Activated B cell treated with CpG ODN at 0.5 μM for 24 hours (primary cell): ENCODE measurements at regions of chr19 and their contacts with region 1.

Region 1: GRCh38 chr19:55653758-55654539 is 886 bp upstream of the U2AF2 start:
- DNase-seq: peak; percentile 95
- ATAC-seq: peak; percentile 77
- H3K4me3 Mint-ChIP-seq: peak overlapping the region; percentile 95
- H3K27ac Mint-ChIP-seq: peak overlapping the region; percentile 98
- H3K4me1 Mint-ChIP-seq: peaks cover 56% of the 10 kb centered on the region
- H3K27me3 Mint-ChIP-seq: no peaks in the 10 kb centered on the region
- CTCF ChIP-seq: peak; percentile 97

Region 2: DNA sequence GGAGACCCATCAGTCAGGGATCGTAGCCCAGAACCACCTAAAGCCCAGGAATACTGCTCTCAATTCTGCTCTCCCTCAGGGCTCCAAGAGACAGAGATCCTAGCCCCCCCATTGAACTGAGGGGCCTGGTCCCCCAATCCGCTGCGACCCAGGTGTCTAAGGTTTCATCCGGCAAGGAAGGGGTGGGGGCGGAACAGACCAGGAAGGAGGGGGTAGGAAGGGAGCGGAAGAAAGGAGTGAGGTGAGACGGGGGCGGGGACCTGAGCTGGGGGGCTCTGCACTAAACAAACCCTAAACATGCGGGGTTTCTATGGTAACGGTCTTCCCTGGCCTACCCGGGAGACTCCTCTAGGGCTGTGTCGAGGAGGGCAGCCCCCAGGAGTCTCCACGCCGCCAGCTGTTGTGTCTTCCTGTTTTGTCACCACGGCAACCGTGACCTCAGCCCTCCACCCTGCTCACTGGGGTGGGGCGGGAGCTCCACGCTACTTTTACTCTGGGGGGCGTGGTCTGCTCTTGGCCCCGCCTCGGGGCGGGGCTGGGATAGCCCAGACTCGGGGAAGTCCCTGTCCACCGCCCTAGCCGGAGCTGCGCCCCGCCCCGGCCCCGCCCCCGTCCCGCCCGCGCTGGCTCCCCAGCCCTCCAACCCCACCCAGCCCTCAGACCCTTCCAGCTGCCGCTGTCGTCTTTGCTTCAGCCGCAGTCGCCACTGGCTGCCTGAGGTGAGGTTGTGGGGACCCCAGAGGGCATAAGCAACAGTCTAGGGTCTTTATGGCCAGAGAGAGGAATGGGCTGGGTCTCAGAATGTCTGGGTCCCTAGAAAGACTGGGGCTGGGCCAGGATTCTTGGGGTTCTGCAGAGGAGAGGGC is 1786.5 kb before region 1 on chr19 and contains the start of gene MYADM:
- CTCF ChIA-PET with region 1: no interaction called
- POLR2A ChIA-PET with region 1: no interaction called
- intact Hi-C with region 1: loop called (anchors 5 kb)
- DNase-seq: peak; percentile 99
- ATAC-seq: peak; percentile 65
- H3K4me3 Mint-ChIP-seq: peak within 1 kb of the TSS; percentile 91
- H3K27ac Mint-ChIP-seq: peak within 1 kb of the TSS; percentile 93
- H3K4me1 Mint-ChIP-seq: peaks cover 44% of the 10 kb centered on the region
- H3K27me3 Mint-ChIP-seq: no peaks in the 10 kb centered on the region
- CTCF ChIP-seq: no peak
- total RNA-seq, gene MYADM: 10.9 and 12.9 TPM in 2 replicates

Region 3: GRCh38 chr19:55339048-55339888 is 314.7 kb before region 1 on chr19 and contains the start of gene KMT5C:
- CTCF ChIA-PET with region 1: no interaction called
- POLR2A ChIA-PET with region 1: interaction called, 3 read pairs
- intact Hi-C with region 1: loop called (anchors 1 kb)
- DNase-seq: peak; percentile 99
- ATAC-seq: peak; percentile 81
- H3K4me3 Mint-ChIP-seq: peak within 1 kb of the TSS; percentile 95
- H3K27ac Mint-ChIP-seq: peak within 1 kb of the TSS; percentile 90
- H3K4me1 Mint-ChIP-seq: peaks cover 31% of the 10 kb centered on the region
- H3K27me3 Mint-ChIP-seq: peaks cover 7% of the 10 kb centered on the region
- CTCF ChIP-seq: no peak
- total RNA-seq, gene KMT5C: 7.2 and 8.1 TPM in 2 replicates

Region 4: DNA sequence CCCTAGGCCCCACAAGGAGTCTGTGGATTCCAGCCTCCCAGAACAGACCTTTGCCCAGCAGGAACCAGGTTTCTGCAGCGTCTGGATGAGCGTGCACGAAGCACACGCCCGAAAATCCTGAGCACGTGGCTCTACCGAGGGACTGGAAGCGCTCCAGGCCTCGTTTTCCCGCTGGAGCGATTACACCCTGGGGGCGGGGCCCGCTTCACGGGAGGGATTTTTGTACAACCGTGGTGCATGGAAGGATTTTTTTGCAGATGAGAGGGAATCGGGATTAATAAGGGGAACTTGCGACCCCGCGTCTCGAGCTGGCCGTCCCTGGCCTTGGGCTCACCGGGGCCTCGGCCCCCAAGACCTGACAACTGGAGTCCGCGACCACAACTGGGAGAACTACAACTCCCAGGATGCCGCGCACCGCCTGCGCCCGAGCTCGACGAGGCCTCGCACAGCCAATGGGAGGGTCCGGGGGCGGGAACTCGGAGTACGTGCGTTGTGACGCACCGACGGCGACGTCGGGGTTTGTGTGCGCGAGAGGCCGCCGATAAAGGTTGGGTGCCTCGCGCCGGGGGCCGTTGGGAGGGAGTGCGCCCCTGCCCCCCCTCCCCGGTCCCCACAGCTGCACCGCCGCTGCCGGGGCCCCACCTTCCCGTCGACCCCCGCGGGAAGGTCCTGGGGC is 177.7 kb before region 1 on chr19 and contains the start of gene ZNF628:
- CTCF ChIA-PET with region 1: no interaction called
- POLR2A ChIA-PET with region 1: interaction called, 16 read pairs
- intact Hi-C with region 1: no loop called
- DNase-seq: peak; percentile 97
- ATAC-seq: peak; percentile 90
- H3K4me3 Mint-ChIP-seq: peak within 1 kb of the TSS; percentile 91
- H3K27ac Mint-ChIP-seq: peak within 1 kb of the TSS; percentile 89
- H3K4me1 Mint-ChIP-seq: peaks cover 33% of the 10 kb centered on the region
- H3K27me3 Mint-ChIP-seq: no peaks in the 10 kb centered on the region
- CTCF ChIP-seq: no peak
- total RNA-seq, gene ZNF628: 10.4 and 12.7 TPM in 2 replicates

Region 5: DNA sequence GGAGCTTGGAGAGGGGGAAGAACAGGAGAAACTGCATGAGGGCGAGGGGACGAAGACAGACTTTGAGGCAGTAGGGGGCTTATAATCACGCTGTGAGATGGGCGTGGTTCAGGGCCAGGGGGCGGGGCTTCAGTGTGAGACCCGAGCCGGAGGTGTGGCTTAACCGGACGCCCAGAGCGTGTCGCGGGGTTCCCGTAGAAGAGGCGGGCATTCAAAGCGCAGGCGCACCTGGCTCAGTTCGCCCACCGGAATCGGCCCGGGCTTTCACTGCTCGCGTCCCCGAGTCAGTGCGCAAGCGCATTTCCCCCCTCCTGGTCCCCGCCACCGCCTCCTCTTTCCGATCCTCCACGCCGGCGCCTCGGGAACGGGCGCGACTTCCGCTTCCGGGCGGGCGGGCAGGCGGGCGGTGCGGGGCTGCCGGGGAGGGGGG is 48.7 kb before region 1 on chr19:
- CTCF ChIA-PET with region 1: no interaction called
- POLR2A ChIA-PET with region 1: interaction called, 45 read pairs
- intact Hi-C with region 1: no loop called
- DNase-seq: peak; percentile 94
- ATAC-seq: peak; percentile 76
- H3K4me3 Mint-ChIP-seq: peak overlapping the region; percentile 93
- H3K27ac Mint-ChIP-seq: peak overlapping the region; percentile 94
- H3K4me1 Mint-ChIP-seq: peaks cover 50% of the 10 kb centered on the region
- H3K27me3 Mint-ChIP-seq: no peaks in the 10 kb centered on the region
- CTCF ChIP-seq: no peak

Region 6: GRCh38 chr19:55643348-55644176 is 10.4 kb before region 1 on chr19 and contains the start of gene ZNF581:
- CTCF ChIA-PET with region 1: interaction called, 3 read pairs
- POLR2A ChIA-PET with region 1: interaction called, 55 read pairs
- intact Hi-C with region 1: loop called (anchors 1 kb)
- DNase-seq: peak; percentile 84
- ATAC-seq: peak; percentile 51
- H3K4me3 Mint-ChIP-seq: peak within 1 kb of the TSS; percentile 86
- H3K27ac Mint-ChIP-seq: peak within 1 kb of the TSS; percentile 96
- H3K4me1 Mint-ChIP-seq: peaks cover 66% of the 10 kb centered on the region
- H3K27me3 Mint-ChIP-seq: no peaks in the 10 kb centered on the region
- CTCF ChIP-seq: no peak
- total RNA-seq, gene ZNF581: 42.7 and 46.5 TPM in 2 replicates

Region 7: GRCh38 chr19:55766466-55766865 is 112.5 kb after region 1 on chr19:
- CTCF ChIA-PET with region 1: no interaction called
- POLR2A ChIA-PET with region 1: no interaction called
- intact Hi-C with region 1: no loop called
- DNase-seq: no peak
- ATAC-seq: no peak
- H3K4me3 Mint-ChIP-seq: no peak overlapping the region
- H3K27ac Mint-ChIP-seq: no peak overlapping the region
- H3K4me1 Mint-ChIP-seq: no peaks in the 10 kb centered on the region
- H3K27me3 Mint-ChIP-seq: peaks cover 22% of the 10 kb centered on the region
- CTCF ChIP-seq: no peak

Region 8: GRCh38 chr19:55809381-55810058 is 155.6 kb after region 1 on chr19:
- CTCF ChIA-PET with region 1: interaction called, 4 read pairs
- POLR2A ChIA-PET with region 1: interaction called, 9 read pairs
- intact Hi-C with region 1: loop called (anchors 1 kb)
- DNase-seq: peak; percentile 19
- ATAC-seq: peak; percentile 97
- H3K4me3 Mint-ChIP-seq: peak overlapping the region; percentile 52
- H3K27ac Mint-ChIP-seq: peak overlapping the region; percentile 27
- H3K4me1 Mint-ChIP-seq: peaks cover 7% of the 10 kb centered on the region
- H3K27me3 Mint-ChIP-seq: peaks cover 4% of the 10 kb centered on the region
- CTCF ChIP-seq: no peak